Naive thymus-derived CD4-positive, alpha-beta T cell (primary cell): ENCODE measurements at regions of chr21 and their contacts with region 1.

Region 1: GRCh38 chr21:15857740-15858139 is 128.0 kb downstream of the USP25 start:
- DNase-seq: no peak
- ATAC-seq: no peak
- H3K4me3 ChIP-seq: no peak overlapping the region
- H3K4me3 Mint-ChIP-seq: peak overlapping the region in 3 of 10 donors; percentile 25 to 62 (median 48)
- H3K27ac ChIP-seq: no peak overlapping the region
- H3K27ac Mint-ChIP-seq: peak overlapping the region in 2 of 9 donors; percentile 73 to 82
- H3K4me1 ChIP-seq: peaks cover 0 to 6% of the 10 kb centered on the region in 2 donors
- H3K4me1 Mint-ChIP-seq: peaks cover 7 to 27% (median 15%) of the 10 kb centered on the region in 7 donors
- H3K27me3 ChIP-seq: no peaks in the 10 kb centered on the region
- H3K27me3 Mint-ChIP-seq: no peaks in the 10 kb centered on the region

Region 2: GRCh38 chr21:14376851-14377250 is 1480.9 kb before region 1 on chr21:
- CTCF ChIA-PET with region 1: no interaction called
- POLR2A ChIA-PET with region 1: no interaction called
- intact Hi-C with region 1: loop called in 1 of 2 experiments (anchors 10 kb)
- DNase-seq: no peak
- ATAC-seq: no peak
- H3K4me3 ChIP-seq: no peak overlapping the region
- H3K4me3 Mint-ChIP-seq: no peak overlapping the region
- H3K27ac ChIP-seq: no peak overlapping the region
- H3K27ac Mint-ChIP-seq: peak overlapping the region in 1 of 9 donors; percentile 59
- H3K4me1 ChIP-seq: peaks cover under 1 to 12% of the 10 kb centered on the region in 2 donors
- H3K4me1 Mint-ChIP-seq: peaks cover 7 to 36% (median 22%) of the 10 kb centered on the region in 7 donors
- H3K27me3 ChIP-seq: no peaks in the 10 kb centered on the region
- H3K27me3 Mint-ChIP-seq: no peaks in the 10 kb centered on the region